Right ventricle myocardium superior (tissue), 1 donor: ENCODE measurements at regions of chr19 and their contacts with region 1.

Region 1: GRCh38 chr19:45178262-45179071 is at the start of gene BLOC1S3:
- DNase-seq: peak; percentile 100
- ATAC-seq: peak; percentile 98
- total RNA-seq, gene BLOC1S3: 3.6 TPM

Region 2: DNA sequence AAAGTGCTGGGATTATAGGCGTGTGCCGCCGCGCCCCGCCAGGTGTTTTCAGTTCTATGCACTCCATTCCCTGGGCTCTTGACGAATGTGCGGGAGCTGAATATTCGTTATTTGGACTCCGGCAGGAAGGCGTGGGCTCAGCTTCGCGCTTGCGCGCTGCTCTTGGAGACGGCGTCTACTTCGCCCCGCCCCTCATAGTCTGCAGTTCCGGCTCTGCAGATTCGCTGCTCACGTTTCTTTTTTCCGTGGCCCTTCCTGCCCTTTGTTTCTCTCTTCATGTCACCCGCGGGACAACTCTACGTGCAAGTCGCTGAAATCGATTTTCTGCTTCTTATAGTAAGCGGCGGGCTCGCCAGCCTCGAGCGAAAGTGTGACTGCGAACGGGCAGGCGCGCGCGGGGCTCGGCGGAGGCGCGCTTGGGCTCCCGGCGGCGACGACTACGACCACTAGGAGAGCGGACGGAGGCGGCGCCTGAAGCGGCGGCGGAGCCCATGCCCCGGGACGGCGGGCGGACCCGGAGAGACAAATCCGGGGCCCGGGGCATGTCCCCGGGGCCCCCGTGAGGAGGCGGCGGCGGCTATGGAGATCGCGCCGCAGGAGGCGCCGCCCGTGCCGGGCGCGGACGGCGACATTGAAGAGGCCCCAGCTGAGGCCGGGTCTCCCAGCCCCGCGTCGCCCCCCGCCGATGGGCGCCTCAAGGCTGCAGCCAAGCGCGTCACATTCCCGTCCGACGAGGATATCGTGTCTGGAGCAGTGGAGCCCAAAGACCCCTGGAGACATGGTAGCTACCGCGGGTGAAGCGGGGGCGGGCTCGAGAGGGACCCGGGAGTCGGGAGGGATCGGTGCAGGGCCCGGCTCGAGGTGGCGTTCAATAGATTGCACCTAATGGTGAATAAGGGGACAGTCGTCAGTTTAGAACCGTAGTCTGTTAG is 85.5 kb before region 1 on chr19 and contains the start of gene PPP1R37:
- intact Hi-C with region 1: loop called (anchors 5 kb)
- DNase-seq: peak; percentile 96
- ATAC-seq: peak; percentile 93
- total RNA-seq, gene PPP1R37: 13.7 TPM

Region 3: DNA sequence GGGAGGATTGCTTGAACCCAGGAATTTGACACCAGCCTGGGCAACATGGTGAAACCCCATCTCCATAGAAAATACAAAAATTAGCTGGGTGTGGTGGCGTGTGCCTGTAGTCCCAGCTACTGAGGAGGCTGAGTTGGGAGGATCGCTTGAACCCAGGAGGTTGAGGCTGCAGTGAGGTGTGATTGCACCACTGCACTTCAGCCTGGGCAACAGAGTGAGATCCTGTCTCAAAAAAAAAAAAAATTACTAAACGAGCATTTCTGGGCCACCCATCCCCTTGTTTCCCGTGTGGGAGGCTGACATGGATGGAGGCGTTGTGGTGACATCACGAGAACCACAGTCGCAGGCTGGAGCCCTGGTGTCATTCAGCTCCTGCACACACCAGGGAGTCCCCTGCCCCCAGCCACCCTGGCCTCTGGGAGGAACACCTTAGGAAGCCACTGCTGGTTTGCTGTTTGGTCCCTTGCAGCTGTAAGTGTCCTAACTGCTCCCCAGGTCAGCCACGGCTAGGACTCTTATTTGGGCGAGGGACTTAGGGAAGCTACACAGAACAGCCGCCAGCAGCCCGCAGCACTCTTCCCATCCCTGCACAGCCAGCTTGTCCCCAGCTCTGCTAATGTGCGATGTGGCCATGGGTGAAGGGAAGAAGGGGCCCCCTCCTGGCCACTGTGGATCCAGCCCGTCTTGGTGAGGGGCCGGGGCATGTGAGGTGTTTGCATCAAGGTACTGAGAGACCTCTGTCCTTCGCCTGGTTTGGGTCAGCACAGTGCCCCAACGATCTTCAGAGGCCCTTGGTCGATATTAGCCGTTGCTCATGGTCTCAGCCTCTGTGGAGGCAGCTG is 30.4 kb before region 1 on chr19:
- intact Hi-C with region 1: no loop called
- DNase-seq: no peak
- ATAC-seq: no peak